ENCODE measurements at regions of chr19 and their contacts with region 1.

Region 1: DNA sequence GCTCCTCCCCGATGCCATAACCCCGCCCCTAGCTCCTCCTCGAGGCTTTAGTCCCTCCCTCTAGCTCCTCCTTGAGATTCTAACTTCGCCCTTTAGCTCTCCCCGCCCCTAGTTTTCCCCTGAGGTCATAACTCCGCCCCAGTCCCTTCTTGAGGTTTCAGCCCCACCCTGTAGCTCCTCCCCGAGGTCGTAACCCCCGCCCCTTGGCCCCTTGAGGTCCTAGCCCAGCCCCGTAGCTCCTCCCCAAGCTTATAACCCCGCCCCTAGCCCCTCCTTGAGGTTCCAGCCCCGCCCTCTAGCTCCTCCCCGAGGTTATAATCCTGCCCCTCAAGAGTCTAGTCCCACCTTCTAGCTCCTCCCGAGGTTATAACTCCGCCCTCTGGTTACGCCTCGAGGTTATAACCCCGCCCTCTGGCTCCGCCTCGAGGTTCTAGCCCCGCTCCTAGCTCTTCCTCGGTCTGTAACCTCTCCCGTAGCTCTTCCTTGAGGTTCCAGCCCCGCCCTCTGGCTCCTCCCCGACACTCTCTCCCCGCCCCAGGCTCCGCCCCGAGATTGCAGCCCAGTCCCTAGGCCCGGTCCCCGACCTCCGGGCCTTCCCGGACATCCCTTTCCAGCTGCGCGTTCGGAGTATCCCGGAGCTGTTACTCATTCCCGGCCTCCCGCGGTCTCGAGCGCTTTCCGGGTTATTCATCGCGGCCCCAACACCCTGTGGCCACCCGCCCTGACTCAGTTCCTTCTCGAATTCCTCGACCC is 1.4 kb downstream of the PLAUR start:
- DNase-seq: no peak
- H3K4me3 Mint-ChIP-seq: peak overlapping the region; percentile 82
- H3K27ac Mint-ChIP-seq: peak overlapping the region; percentile 77
- H3K4me1 Mint-ChIP-seq: peaks cover 50% of the 10 kb centered on the region
- H3K27me3 Mint-ChIP-seq: no peaks in the 10 kb centered on the region

Region 2: DNA sequence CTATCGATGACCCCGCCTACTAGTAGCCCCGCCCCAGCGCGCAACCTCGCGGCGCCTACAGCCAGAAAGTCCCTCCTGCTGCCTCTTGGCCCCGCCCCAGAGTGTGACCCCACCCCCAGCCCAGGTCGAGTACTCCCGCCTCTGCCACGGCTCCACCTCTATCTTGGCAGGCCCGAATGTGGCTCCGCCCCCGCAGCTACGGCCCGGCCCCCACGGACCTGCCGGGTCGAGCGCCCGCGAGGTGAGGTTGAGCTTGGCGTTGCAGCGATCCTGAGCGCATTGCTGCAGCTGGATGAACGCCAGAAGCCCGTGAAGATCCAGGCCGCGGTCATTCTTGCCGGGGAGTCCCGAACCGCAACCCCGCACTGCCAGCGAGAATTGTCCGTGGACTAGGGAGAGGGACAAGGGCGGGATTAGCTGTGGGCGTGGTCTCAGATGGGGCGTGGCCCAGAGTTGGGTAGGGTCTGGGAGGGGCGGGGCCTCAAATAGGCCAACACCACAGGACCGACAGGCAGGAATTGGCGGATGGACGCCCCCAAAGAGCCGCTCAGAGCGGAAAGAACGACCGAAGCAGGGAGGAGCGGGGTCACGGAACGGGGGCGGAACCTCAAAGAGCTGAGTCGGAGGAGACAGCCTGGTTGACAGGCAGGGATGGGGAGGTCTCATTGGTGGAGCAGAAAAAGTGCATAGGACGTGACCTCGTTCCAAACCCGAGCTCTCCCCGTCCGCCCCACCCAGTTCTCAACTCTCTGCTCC is 205.0 kb before region 1 on chr19:
- CTCF ChIA-PET with region 1: no interaction called
- intact Hi-C with region 1: loop called (anchors 1 kb)
- DNase-seq: peak; percentile 100
- H3K4me3 Mint-ChIP-seq: peak overlapping the region; percentile 94
- H3K27ac Mint-ChIP-seq: peak overlapping the region; percentile 86
- H3K4me1 Mint-ChIP-seq: peaks cover 37% of the 10 kb centered on the region
- H3K27me3 Mint-ChIP-seq: no peaks in the 10 kb centered on the region

Region 3: DNA sequence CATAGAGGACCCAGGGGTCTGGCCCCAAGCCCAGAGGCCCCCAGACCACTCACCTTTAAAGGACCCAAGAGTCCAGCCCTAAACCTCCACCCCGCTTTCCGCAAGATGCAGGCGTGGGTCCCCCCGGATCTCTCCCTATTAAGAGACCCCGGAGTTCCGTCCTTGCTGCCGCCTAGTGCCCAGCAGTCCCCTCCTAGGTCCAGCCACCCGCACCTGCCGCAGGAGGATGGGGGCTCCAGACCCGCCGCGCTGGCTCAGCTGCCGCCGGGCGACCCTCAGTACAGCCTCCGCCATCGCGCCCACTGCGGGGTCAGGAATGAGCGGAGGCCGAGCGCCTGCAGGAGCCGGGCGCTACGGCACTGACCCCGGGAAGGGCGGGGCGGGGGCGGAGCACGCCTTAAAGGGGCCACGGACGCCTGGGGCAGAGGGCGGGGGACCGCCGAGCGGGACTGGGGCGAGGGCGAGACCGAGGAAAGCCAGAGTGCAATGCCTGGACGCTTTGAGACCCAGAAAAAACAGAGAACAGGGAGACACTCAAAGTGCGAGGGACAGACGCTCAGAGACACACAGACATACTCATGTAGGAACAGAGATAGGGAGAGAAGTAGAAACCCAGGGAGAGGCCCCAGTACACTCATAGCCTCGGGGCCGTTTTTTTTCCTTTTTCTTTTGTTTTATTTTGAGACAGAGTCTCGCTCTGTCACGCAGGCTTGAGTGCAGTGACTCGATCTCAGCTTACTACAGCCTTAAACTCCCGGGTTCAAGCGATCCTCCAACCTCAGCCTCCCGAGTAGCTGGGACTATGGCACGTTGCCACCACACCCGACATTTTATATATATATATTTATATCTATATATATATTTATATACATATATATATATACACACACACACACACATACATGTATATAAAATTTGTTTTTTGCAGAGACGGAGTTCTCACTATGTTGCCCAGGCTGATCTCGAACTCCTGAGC is 141.4 kb before region 1 on chr19 and contains the start of gene ETHE1:
- CTCF ChIA-PET with region 1: no interaction called
- intact Hi-C with region 1: loop called (anchors 2 kb)
- DNase-seq: peak; percentile 73
- H3K4me3 Mint-ChIP-seq: peak within 1 kb of the TSS; percentile 97
- H3K27ac Mint-ChIP-seq: peak within 1 kb of the TSS; percentile 96
- H3K4me1 Mint-ChIP-seq: peaks cover 22% of the 10 kb centered on the region
- H3K27me3 Mint-ChIP-seq: no peaks in the 10 kb centered on the region
- total RNA-seq, gene ETHE1: 62.1 to 64.4 TPM

Region 4: GRCh38 chr19:43639519-43640423 is 28.8 kb before region 1 on chr19 and contains the start of gene CADM4:
- CTCF ChIA-PET with region 1: no interaction called
- intact Hi-C with region 1: loop called (anchors 2 kb)
- DNase-seq: peak; percentile 49
- H3K4me3 Mint-ChIP-seq: peak within 1 kb of the TSS; percentile 72
- H3K27ac Mint-ChIP-seq: no peak within 1 kb of the TSS
- H3K4me1 Mint-ChIP-seq: peaks cover 13% of the 10 kb centered on the region
- H3K27me3 Mint-ChIP-seq: peaks cover 20% of the 10 kb centered on the region
- total RNA-seq, gene CADM4: 0.64 to 0.67 TPM

Region 5: DNA sequence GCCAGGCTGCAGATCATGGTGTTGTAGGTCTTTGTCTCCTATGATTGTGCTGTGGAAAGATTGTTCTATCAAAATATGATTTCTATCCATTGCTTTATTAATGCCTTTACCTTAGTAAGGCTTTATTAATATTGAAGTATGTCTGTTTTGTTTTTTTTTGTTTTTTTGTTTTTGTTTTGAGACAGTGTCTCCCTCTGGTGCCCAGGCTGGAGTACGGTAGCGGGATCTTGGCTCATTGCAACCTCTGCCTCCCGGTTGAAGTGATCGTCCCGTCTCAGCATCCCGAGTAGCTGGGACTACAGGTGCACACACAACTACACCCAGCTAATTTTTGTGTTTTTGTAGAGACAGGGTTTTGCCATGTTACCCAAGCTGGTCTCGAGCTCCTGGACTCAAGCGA is 55.0 kb after region 1 on chr19:
- CTCF ChIA-PET with region 1: interaction called, 11 read pairs
- intact Hi-C with region 1: loop called (anchors 5 kb)
- DNase-seq: no peak
- H3K4me3 Mint-ChIP-seq: no peak overlapping the region
- H3K27ac Mint-ChIP-seq: no peak overlapping the region
- H3K4me1 Mint-ChIP-seq: no peaks in the 10 kb centered on the region
- H3K27me3 Mint-ChIP-seq: no peaks in the 10 kb centered on the region

Region 6: DNA sequence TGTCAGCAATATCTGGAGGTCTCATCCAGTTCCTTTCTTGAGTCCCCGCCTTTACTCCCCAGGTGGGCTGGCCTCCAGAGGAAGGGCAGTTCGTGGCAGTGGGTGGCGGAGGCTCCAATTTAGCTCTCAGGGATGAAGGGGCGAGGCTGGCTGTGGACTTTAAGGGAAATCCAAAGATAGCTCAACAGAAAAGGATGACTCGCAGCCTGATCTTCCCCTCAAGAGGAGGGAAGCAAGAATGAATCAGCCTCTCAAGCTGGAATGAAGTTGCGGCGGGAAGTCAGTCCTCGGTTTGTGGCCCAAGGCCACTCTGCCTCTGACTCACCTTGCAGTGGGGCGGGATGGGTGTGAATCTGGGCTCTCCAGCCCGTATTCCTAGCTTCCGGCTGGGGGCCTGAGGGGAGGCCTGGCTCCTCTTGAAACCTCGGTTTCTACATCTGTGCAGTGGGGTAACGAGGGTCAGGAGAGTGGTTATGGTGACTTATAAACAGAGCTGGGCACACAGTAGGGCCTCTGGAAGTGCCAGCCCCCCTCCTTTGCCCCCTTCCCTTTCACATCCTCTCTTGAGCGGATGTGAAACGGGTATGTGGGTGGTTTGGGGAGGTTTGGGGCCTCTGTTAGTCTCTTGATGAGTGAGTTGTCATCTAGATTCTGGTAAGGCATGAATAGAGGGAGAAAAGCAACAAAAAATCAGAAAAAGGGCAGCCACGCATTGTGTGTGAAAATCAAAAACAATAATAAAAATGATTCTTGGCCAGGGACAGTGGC is 96.7 kb after region 1 on chr19:
- CTCF ChIA-PET with region 1: interaction called, 7 read pairs
- intact Hi-C with region 1: loop called (anchors 1 kb)
- DNase-seq: peak; percentile 95
- H3K4me3 Mint-ChIP-seq: peak overlapping the region; percentile 53
- H3K27ac Mint-ChIP-seq: peak overlapping the region; percentile 100
- H3K4me1 Mint-ChIP-seq: peaks cover 80% of the 10 kb centered on the region
- H3K27me3 Mint-ChIP-seq: no peaks in the 10 kb centered on the region

Region 7: DNA sequence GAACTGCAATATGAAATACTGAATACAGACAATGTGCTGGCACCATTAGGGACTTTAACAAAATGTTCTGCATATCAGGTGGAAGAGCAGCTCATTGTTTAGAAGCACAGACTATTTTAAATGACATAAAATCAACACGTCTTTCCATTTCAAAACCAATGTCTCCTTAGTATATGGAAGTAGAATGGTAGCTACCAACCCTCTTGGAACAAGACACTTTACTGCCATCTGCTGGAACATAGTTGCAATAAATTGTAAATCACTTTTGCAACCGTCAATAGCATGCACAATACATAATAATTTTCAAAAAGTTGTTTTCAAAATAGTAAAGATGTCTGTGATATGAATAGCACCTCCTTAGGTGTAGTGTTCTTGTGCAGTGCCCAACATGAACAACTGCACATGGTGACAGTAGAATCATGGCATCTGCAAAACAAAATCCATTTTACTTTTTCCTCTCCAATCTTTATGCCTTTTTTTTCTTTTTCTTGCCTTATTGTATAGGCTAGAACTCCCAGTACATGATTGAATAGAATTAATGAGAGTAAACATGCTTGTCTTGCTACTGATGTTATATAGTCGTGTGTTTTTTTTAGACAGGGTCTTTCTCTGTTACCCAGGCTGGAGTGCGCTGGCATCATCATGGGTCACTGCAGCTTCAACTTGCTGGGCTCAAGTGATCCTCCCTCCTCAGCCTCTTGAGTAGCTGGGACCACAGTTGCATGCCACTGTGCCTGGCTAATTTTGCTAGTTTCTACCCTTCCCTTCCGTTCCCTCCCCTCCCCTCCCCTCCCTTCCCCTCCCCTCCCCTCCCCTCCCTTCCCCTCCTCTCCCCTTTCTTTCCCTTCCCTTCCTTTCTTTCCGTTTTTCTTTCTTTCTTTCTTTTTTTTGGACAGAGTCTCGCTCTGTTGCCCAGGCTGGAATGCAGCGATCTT is 141.4 kb after region 1 on chr19:
- CTCF ChIA-PET with region 1: interaction called, 8 read pairs
- intact Hi-C with region 1: loop called (anchors 1 kb)
- DNase-seq: no peak
- H3K4me3 Mint-ChIP-seq: no peak overlapping the region
- H3K27ac Mint-ChIP-seq: no peak overlapping the region
- H3K4me1 Mint-ChIP-seq: peaks cover 2% of the 10 kb centered on the region
- H3K27me3 Mint-ChIP-seq: peaks cover 3% of the 10 kb centered on the region